ENCODE measurements at regions of chr6 and their contacts with region 1.

Region 1: DNA sequence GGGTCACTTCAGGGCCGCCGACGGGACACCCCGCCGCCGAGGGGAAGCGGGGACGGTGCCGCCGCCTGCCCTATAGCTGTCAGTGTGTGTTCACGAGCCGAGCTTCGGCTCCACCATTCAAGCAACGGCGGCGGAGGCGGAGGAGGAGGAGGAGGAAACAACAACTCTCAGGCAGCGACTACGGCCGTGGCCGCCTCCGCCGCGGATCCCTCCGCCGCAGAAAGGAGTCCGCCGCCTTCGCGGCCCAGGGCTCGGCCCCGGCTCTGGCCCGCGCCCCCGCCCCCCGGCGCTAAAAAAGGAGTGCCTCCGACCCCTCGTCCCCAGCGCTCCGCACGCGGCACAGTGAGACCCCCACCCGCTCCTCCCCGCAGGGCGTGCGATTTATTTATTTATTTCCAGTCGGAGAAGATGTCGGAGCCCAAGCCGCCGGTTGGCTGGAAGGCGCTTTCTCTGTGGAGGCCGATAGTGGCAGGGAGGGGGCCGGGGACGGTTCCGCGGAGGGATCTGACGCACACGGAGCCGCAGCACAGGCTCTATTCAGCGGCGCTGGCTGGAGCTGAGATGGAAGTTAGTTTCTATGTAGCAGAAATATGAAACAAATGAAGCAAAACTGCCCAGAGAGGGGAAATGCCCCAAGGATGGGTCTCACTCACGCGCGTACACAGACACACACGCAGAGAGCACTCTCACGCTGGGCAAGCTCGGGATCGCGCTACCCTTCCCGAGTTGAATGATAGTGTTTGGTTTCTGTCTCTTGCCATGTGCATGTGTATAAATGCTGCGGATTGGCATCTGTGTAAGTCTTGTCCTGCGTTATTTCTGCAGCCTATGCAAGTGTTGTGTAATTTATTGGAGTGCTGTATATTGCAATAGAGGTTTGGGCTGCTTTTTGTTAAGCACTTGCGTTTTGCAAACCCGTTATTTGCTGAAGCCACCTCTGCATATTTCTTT is at the start of gene PHIP:
- DNase-seq: peak; percentile 94 to 97
- ATAC-seq: peak; percentile 88 to 92 (median 90)
- H3K4me3 ChIP-seq: peak within 1 kb of the TSS; percentile 89
- H3K27ac ChIP-seq: peak within 1 kb of the TSS; percentile 97
- H3K4me1 ChIP-seq: peaks cover 26% of the 10 kb centered on the region
- H3K27me3 ChIP-seq: no peaks in the 10 kb centered on the region
- CTCF ChIP-seq: no peak
- total RNA-seq, gene PHIP: 12.1 to 15.3 (median 13.5) TPM

Region 2: DNA sequence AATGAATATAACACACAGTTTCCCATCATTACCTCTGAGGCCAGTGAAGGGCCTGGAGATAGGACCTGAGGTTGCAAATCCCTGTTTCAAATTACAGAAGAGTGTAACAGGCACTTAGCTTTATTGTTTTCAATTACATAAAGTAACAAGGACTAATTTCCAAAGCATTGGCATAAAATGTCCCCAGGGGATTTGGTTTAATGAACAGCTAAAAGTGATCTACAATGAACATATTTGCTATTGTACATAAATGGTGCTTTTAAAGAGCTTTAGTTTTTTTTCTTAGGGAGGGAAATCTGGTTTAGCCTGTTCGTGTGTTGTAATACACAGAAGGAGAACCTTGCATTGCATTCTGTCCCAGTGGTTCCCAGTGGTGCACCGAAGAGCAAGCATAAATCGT is 101.7 kb after region 1 on chr6:
- intact Hi-C with region 1: no loop called
- DNase-seq: no peak
- ATAC-seq: no peak
- H3K4me3 ChIP-seq: no peak overlapping the region
- H3K27ac ChIP-seq: no peak overlapping the region
- H3K4me1 ChIP-seq: no peaks in the 10 kb centered on the region
- H3K27me3 ChIP-seq: no peaks in the 10 kb centered on the region
- CTCF ChIP-seq: no peak

Region 3: DNA sequence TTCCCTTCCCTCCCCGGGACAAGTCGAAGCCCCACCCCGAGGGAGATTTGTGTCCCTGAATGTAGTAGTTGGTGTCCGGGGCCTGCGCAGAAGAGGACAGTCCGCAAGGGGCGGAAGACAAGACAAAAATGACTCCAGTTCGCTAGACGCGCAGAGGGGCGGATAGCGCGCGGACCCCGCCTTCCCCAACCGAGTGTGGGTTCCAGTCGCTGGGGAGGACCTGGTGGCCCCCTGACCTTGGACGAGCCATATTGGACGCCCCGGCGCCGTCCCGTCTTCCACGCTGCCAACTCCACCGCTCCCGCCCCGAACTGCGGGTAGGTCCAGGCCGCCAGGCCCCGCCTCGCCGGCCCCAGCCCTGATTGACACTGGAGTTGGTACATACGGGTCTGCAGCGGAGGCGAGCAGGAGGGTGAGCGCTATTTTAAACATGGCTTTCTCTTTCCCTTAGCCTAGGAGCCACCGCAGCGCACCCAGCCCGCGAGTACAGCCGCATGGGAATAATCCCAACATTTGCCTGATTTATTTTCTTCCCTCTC is 155.3 kb after region 1 on chr6:
- intact Hi-C with region 1: loop called (anchors 2 to 5 kb)
- DNase-seq: peak; percentile 92 to 95
- ATAC-seq: peak; percentile 95 to 96 (median 96)
- H3K4me3 ChIP-seq: peak overlapping the region; percentile 87
- H3K27ac ChIP-seq: peak overlapping the region; percentile 83
- H3K4me1 ChIP-seq: peaks cover 21% of the 10 kb centered on the region
- H3K27me3 ChIP-seq: no peaks in the 10 kb centered on the region
- CTCF ChIP-seq: peak; percentile 46

Region 4: DNA sequence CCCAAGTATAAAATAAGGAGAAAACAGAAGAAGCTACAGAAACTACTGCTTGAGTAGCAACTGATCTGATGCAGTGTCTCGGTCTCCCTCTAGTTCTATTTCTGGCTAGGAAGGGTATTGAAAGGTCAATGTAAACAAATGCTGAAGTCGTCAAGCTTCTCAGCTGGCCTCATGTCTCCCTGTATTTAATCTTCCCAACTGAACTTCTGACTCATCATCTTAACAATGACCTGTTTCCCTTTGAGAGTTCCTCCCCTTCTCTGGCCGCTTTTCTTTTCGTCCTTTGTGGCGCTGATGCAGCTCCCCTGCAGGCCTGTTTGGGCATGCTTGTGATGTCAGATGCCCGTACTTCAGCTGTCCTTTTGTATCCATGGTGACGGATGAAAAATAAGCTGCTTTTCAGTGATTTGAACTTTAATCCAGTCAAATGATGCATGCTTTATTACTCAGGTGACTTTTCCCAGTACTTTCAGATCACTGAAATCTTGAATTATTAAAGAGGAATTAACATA is 466.6 kb after region 1 on chr6:
- intact Hi-C with region 1: loop called (anchors 5 to 10 kb)
- DNase-seq: peak; percentile 65 to 82
- ATAC-seq: peak; percentile 94 to 98 (median 96)
- H3K4me3 ChIP-seq: peak overlapping the region; percentile 47
- H3K27ac ChIP-seq: peak overlapping the region; percentile 82
- H3K4me1 ChIP-seq: peaks cover 26% of the 10 kb centered on the region
- H3K27me3 ChIP-seq: no peaks in the 10 kb centered on the region
- CTCF ChIP-seq: peak; percentile 57

Measured in psoas muscle (tissue), 8 donors.